BJ (cell line): ENCODE measurements at regions of chr10 and their contacts with region 1.

Region 1: DNA sequence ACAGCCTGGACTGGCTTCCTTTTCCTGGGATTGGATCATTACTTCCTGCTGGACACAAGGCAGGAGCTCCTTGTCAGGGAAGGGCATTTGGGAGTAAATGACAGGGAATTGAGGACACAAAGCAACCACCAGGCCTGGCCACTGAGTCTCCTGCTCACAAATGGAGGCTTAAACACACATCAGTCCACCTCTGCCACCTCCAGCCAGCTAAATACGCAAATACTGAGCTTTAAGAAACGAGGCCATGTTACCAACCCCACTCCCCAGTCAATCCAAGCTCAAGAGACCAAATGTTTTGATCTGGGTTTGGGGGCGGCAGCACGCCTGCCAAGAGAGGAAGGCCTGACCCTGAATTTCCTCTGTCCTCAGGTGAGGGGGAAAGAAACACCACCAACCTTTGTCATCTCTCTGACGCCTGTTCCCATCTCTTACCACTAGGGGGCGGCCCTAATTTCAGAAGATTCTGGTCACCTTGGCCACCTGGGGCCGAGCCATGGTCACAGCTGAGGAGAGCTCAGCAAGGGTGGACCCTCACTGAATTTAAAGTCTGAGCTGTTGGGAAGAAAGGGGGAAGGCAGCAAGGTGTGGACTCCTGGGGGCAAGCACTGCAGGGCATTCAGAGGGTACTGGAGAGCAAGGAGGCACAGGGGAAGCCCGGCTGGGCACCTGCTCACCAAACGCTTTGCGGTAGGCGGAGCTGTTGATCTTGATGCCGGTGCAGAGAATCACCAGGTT is 16.5 kb downstream of the AIFM2 start:
- DNase-seq: no peak
- H3K4me3 ChIP-seq: no peak overlapping the region
- H3K27me3 ChIP-seq: no peaks in the 10 kb centered on the region
- CTCF ChIP-seq: peak; percentile 91

Region 2: DNA sequence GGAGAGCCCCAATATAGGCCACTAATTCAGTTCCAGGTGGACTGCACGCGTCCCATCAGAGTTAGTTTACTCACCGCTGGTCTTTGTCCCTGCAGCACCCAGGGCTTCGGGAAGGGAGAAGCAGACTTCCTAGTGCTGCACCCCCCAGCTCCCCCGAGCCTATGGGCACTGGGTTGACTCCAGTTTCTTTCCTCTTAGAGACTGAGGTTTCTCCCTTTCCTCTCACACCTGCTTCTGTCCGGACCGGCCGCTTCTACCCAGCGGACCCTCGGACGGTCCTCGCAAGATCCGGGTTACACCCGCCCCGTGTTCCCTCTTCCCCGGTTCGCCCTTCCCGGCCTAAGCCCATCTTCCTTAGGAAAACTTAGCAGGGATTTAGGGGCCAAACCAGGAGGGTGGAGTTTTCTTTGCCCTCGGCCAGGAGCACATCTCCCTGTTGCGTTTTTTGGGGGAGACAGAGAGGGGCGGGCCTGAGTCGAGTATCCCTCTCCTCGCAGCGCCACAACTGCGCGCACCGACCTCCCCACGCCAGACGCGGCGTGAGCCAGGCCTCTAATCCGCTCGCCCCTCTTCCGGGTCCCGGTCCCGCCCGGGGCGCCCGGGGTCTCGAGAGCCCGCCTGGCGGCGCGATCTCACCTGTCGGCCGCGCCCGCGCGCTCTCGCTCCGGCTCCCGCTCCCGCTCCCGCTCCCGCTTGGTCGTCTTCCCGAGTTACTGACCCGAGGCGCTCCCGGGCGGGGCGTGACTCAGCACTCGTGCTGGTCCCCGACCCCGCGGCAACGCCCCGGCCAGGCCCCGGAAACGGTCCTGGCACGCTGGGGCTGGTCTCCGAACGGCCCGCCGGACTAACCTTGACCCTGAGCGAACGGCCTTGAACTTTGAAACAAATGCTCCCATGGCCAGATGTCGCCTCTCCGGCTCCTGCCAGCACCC is 16.2 kb after region 1 on chr10 and contains the start of gene AIFM2:
- CTCF ChIA-PET with region 1: interaction called, 87 read pairs
- POLR2A ChIA-PET with region 1: interaction called, 4 read pairs
- DNase-seq: no peak
- H3K4me3 ChIP-seq: peak within 1 kb of the TSS; percentile 71
- H3K27me3 ChIP-seq: no peaks in the 10 kb centered on the region
- CTCF ChIP-seq: 0 out of 2 replicates have a peak, but pooled peaks have one; percentile 7
- polyA plus RNA-seq, gene AIFM2: 13.9 and 18.4 TPM in 2 replicates